BJ (cell line): ENCODE measurements at regions of chr16 and their contacts with region 1.

Region 1: GRCh38 chr16:15427648-15428239 is 6.6 kb upstream of the BMERB1 start:
- DNase-seq: no peak
- H3K4me3 ChIP-seq: no peak overlapping the region
- H3K27me3 ChIP-seq: peaks cover 5% of the 10 kb centered on the region
- CTCF ChIP-seq: peak; percentile 72

Region 2: DNA sequence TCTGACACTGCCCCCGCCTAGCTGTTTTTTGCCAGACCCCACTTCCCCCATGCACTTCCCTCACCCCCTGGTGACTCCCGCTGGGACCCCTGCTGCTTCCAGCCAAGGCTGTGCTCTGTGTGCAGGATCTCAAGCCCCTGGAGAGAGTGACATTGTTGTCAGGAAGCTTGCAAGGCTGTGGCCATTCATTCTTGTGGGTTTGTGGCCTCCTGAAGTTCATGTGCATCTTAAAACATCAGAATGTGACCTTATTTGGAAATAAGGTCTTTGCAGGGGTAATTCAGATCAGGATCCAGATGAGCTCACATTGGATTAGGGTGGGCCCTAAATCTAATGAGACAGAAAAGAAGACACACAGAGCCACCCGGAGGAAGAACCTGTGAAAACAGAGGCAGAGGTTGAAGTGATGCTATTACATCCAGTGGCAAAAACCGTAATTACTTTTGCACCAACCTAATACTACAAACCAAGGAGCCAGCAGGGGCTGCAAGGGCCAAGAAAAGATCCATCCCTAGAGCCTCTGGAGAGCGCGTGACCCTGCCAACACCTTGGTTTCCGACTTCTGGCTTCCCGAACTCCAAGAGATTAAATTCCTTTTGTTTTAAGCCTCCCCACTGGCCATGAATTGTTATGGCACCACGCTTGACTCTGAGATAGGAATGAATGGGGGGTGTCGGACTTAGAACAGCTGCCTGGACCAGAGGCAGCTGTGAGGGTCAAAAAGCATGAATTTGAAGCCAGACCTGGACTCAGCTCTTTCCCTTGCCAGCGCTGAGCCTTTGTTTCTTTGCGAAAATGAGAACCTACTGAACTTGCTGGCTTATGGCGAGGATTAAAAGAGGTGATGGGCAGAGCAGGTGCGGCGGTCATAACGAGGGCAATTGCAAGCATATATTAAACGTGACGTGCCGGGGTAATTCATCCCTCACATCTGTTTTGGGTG is 82.1 kb after region 1 on chr16:
- CTCF ChIA-PET with region 1: interaction called, 16 read pairs
- POLR2A ChIA-PET with region 1: no interaction called
- DNase-seq: no peak
- H3K4me3 ChIP-seq: no peak overlapping the region
- H3K27me3 ChIP-seq: no peaks in the 10 kb centered on the region
- CTCF ChIP-seq: peak; percentile 22; the same call in 1 of the 2 replicates

Region 3: GRCh38 chr16:15553313-15554088 is 125.8 kb after region 1 on chr16:
- CTCF ChIA-PET with region 1: interaction called, 60 read pairs
- POLR2A ChIA-PET with region 1: no interaction called
- DNase-seq: no peak
- H3K4me3 ChIP-seq: no peak overlapping the region
- H3K27me3 ChIP-seq: no peaks in the 10 kb centered on the region
- CTCF ChIP-seq: no peak